ENCODE measurements at regions of chr1 and their contacts with region 1.

Region 1: GRCh38 chr1:24201941-24202440 is 14.9 kb upstream of the IFNLR1 start:
- DNase-seq: peak; percentile 69
- ATAC-seq: peak; percentile 32
- H3K4me3 ChIP-seq: no peak overlapping the region
- H3K4me3 Mint-ChIP-seq: no peak overlapping the region
- H3K27ac ChIP-seq: no peak overlapping the region
- H3K27ac Mint-ChIP-seq: no peak overlapping the region
- H3K4me1 ChIP-seq: peaks cover 10 to 33% of the 10 kb centered on the region in 2 donors
- H3K4me1 Mint-ChIP-seq: peaks cover 29% of the 10 kb centered on the region
- H3K27me3 ChIP-seq: peaks cover 0 to 4% (median 0%) of the 10 kb centered on the region in 4 experiments
- H3K27me3 Mint-ChIP-seq: no peaks in the 10 kb centered on the region
- CTCF ChIP-seq: peak; percentile 82

Region 2: GRCh38 chr1:24150234-24151174 is 51.5 kb before region 1 on chr1:
- CTCF ChIA-PET with region 1: interaction called, 237 read pairs
- POLR2A ChIA-PET with region 1: interaction called, 6 read pairs
- intact Hi-C with region 1: loop called (anchors 1 kb)
- DNase-seq: peak; percentile 90
- ATAC-seq: peak; percentile 98
- H3K4me3 ChIP-seq: peak overlapping the region in 4 of 5 experiments; percentile 32 to 50 (median 48)
- H3K4me3 Mint-ChIP-seq: peak overlapping the region; percentile 82
- H3K27ac ChIP-seq: no peak overlapping the region
- H3K27ac Mint-ChIP-seq: peak overlapping the region; percentile 21
- H3K4me1 ChIP-seq: peaks cover 13 to 19% of the 10 kb centered on the region in 2 donors
- H3K4me1 Mint-ChIP-seq: peaks cover 27% of the 10 kb centered on the region
- H3K27me3 ChIP-seq: peaks cover 0 to 7% (median 2%) of the 10 kb centered on the region in 4 experiments
- H3K27me3 Mint-ChIP-seq: peaks cover 3% of the 10 kb centered on the region
- CTCF ChIP-seq: peak; percentile 88

Region 3: GRCh38 chr1:24186993-24187805 is 14.8 kb before region 1 on chr1 and contains the start of gene IFNLR1:
- CTCF ChIA-PET with region 1: interaction called, 202 read pairs
- POLR2A ChIA-PET with region 1: interaction called, 16 read pairs
- intact Hi-C with region 1: loop called (anchors 1 kb)
- DNase-seq: peak; percentile 87
- ATAC-seq: peak; percentile 57
- H3K4me3 ChIP-seq: peak within 1 kb of the TSS; percentile 65 to 85 (median 77)
- H3K4me3 Mint-ChIP-seq: peak within 1 kb of the TSS; percentile 95
- H3K27ac ChIP-seq: peak within 1 kb of the TSS; percentile 82
- H3K27ac Mint-ChIP-seq: peak within 1 kb of the TSS; percentile 93
- H3K4me1 ChIP-seq: peaks cover 69 to 78% of the 10 kb centered on the region in 2 donors
- H3K4me1 Mint-ChIP-seq: peaks cover 83% of the 10 kb centered on the region
- H3K27me3 ChIP-seq: no peaks in the 10 kb centered on the region
- H3K27me3 Mint-ChIP-seq: no peaks in the 10 kb centered on the region
- CTCF ChIP-seq: no peak
- total RNA-seq, gene IFNLR1: 38.0 and 39.7 TPM in 2 replicates

Region 4: DNA sequence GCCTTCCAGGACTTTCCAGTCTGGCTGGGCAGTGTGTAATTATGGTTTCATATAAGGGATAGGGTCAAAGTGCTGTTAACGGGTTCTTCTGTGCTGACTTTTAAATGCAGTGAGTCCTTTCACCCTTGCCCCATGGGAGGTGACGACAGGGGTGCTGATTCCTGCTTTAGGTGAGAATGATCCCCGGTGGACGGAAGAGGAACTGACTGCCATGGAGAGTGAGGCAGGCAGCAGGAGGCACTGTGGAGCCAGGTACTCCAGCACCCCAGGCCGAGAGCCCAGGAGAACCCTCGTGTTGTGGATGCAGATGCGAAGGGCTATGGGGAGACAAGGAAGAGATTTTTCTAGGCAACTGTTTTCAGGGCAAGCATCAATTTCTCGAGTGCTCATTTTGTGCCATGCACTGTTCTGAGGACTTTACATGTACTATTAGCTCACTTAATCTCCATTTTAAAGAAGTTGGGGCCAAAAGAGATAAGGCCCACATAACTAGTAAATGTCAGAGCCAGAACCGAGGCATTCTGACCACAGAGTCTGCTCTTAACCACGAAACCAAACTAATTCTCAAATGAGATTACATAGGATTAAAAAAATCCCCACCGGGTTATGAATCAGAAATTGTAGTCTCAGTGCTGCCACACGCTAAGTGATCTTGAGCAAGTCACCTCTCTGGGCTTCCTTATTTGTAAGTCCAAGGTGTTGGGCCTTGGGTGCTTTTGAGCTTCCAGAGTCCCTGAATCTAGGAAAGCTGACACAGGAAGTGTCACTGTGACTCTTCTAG is 183.4 kb after region 1 on chr1:
- CTCF ChIA-PET with region 1: interaction called, 616 read pairs
- POLR2A ChIA-PET with region 1: interaction called, 4 read pairs
- intact Hi-C with region 1: no loop called
- DNase-seq: no peak
- ATAC-seq: no peak
- H3K4me3 ChIP-seq: no peak overlapping the region
- H3K4me3 Mint-ChIP-seq: peak overlapping the region; percentile 14
- H3K27ac ChIP-seq: no peak overlapping the region
- H3K27ac Mint-ChIP-seq: peak overlapping the region; percentile 41
- H3K4me1 ChIP-seq: peaks cover 12 to 29% of the 10 kb centered on the region in 2 donors
- H3K4me1 Mint-ChIP-seq: peaks cover 28% of the 10 kb centered on the region
- H3K27me3 ChIP-seq: no peaks in the 10 kb centered on the region
- H3K27me3 Mint-ChIP-seq: no peaks in the 10 kb centered on the region
- CTCF ChIP-seq: peak; percentile 43

Region 5: GRCh38 chr1:24415334-24415909 is 213.4 kb after region 1 on chr1 and contains the start of gene NIPAL3:
- CTCF ChIA-PET with region 1: interaction called, 21 read pairs
- POLR2A ChIA-PET with region 1: no interaction called
- intact Hi-C with region 1: no loop called
- DNase-seq: peak; percentile 98
- ATAC-seq: peak; percentile 91
- H3K4me3 ChIP-seq: peak within 1 kb of the TSS; percentile 79 to 94 (median 86)
- H3K4me3 Mint-ChIP-seq: peak within 1 kb of the TSS; percentile 92
- H3K27ac ChIP-seq: peak within 1 kb of the TSS; percentile 37 to 55
- H3K27ac Mint-ChIP-seq: peak within 1 kb of the TSS; percentile 84
- H3K4me1 ChIP-seq: peaks cover 26 to 36% of the 10 kb centered on the region in 2 donors
- H3K4me1 Mint-ChIP-seq: peaks cover 49% of the 10 kb centered on the region
- H3K27me3 ChIP-seq: no peaks in the 10 kb centered on the region
- H3K27me3 Mint-ChIP-seq: no peaks in the 10 kb centered on the region
- CTCF ChIP-seq: peak; percentile 89
- total RNA-seq, gene NIPAL3: 31.6 and 38.8 TPM in 2 replicates

Region 6: GRCh38 chr1:24635195-24635843 is 433.3 kb after region 1 on chr1:
- CTCF ChIA-PET with region 1: interaction called, 51 read pairs
- POLR2A ChIA-PET with region 1: no interaction called
- intact Hi-C with region 1: loop called (anchors 1 kb)
- DNase-seq: peak; percentile 68
- ATAC-seq: peak; percentile 68
- H3K4me3 ChIP-seq: no peak overlapping the region
- H3K4me3 Mint-ChIP-seq: no peak overlapping the region
- H3K27ac ChIP-seq: no peak overlapping the region
- H3K27ac Mint-ChIP-seq: peak overlapping the region; percentile 34
- H3K4me1 ChIP-seq: no peaks in the 10 kb centered on the region
- H3K4me1 Mint-ChIP-seq: peaks cover 2% of the 10 kb centered on the region
- H3K27me3 ChIP-seq: peaks cover 0 to 3% (median under 1%) of the 10 kb centered on the region in 4 experiments
- H3K27me3 Mint-ChIP-seq: peaks cover 8% of the 10 kb centered on the region
- CTCF ChIP-seq: peak; percentile 75

Region 7: GRCh38 chr1:24830680-24831272 is 628.8 kb after region 1 on chr1:
- CTCF ChIA-PET with region 1: interaction called, 9 read pairs
- POLR2A ChIA-PET with region 1: no interaction called
- intact Hi-C with region 1: loop called (anchors 5 kb)
- DNase-seq: peak; percentile 78
- ATAC-seq: peak; percentile 82
- H3K4me3 ChIP-seq: no peak overlapping the region
- H3K4me3 Mint-ChIP-seq: no peak overlapping the region
- H3K27ac ChIP-seq: no peak overlapping the region
- H3K27ac Mint-ChIP-seq: no peak overlapping the region
- H3K4me1 ChIP-seq: peaks cover 13 to 24% of the 10 kb centered on the region in 2 donors
- H3K4me1 Mint-ChIP-seq: peaks cover 51% of the 10 kb centered on the region
- H3K27me3 ChIP-seq: no peaks in the 10 kb centered on the region
- H3K27me3 Mint-ChIP-seq: no peaks in the 10 kb centered on the region
- CTCF ChIP-seq: peak; percentile 98

Measured in B cell (primary cell).